ENCODE measurements at regions of chr2 and their contacts with region 1.

Region 1: DNA sequence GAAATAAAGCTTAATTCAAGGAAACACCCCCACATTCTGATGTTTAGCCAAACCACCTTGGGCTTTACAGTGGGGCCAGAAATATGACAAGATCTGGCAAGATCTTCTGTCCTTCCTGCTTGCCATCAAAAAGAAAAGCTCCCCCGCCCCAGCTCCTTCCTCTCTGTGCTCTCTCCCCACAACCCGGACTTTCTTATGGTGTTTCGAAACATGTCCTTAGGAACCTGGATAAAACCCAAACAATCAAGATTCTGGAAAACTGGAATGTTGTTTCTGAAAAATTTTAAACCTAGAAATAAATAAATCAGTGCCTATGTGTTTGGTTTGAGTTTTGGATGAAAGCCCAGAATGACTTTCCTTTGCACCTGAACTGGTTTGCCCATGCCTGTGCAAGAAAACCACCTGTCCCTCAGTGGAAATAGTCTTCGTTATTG is 136.5 kb downstream of the SP3 start:
- DNase-seq: no peak

Region 2: GRCh38 chr2:173860082-173860481 is 31.5 kb after region 1 on chr2:
- in situ Hi-C with region 1: loop called (anchors 5 kb)
- DNase-seq: no peak

Region 3: DNA sequence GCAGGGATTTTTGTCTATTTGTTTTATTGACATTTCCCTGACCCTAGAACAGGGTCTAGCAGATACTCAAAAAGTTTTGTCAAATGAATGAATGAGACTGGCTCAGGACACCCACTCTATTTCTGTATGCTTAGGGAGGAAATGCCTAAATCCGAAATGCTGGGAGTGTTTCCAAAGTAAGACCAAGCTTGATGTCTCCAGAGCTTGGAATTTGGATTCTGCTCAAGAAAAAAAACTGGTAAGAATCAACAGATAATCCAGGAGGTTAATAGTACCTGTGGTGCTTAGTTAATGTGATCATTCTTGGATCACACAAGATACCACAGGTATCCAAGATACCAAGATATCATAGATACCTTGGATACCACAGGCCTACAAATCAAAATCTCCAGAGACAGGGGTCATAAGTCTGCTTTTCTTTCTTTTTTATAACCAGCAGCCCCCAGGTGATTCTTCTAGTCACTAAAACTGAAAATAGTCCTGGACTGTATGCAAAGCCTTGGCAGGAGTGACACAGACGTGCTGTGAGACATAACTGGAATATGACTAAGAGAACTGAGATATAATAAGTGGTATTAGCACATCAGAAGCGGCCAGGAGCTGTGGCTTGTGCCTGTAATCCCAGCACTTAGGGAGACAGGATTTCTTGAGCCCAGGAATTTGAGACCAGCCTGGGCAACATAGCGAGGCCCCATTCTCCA is 176.4 kb after region 1 on chr2:
- in situ Hi-C with region 1: no loop called
- DNase-seq: no peak

Region 4: GRCh38 chr2:174076040-174076439 is 247.4 kb after region 1 on chr2:
- in situ Hi-C with region 1: no loop called
- DNase-seq: no peak

Region 5: DNA sequence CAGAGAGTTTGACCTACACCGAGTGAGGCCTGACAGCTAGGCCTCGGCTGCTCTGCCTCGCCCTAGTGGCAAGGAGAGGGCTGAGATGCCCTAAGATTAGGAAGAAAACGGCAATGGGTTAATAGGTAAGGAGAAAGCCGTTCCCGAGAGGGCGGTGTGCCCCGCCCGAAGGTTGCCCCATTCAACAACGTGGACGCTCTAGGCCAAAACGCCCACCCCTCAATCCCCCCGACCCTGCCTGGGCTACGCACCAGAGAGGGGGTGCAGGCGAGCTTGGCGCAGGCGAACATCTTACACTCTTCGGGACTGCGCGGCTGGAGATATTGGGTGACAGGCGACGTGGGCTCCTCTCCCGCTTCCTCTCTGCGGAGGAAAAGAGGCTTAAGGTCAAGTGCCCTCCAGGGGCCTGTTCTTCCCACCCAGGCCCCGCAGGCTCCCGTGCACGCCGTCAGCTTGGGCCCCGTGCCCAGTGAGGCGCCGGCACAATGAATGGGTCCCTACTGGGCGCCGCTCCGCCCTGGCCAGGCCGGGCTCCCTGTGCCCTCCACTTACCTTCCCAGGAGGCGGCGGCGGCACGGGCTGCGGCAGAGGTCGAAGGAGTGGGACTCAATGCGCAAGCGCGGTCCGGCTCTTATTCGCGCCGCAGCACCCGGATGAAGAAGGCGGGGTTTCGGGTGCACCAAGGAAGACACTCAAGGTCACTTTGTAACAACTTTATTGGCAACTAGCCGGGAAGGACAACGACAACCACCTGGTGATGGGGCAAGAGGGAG is 1352.7 kb after region 1 on chr2 and contains the start of gene ATP5MC3:
- in situ Hi-C with region 1: no loop called
- DNase-seq: peak; percentile 93
- total RNA-seq, gene ATP5MC3: 265 and 271 TPM in 2 replicates